ENCODE measurements at regions of chr19 and their contacts with region 1.

Region 1: GRCh38 chr19:40444192-40445028 is at the start of gene SERTAD3:
- DNase-seq: peak; percentile 100
- H3K4me3 Mint-ChIP-seq: peak within 1 kb of the TSS; percentile 90
- H3K27ac Mint-ChIP-seq: peak within 1 kb of the TSS; percentile 92
- H3K4me1 Mint-ChIP-seq: peaks cover 20% of the 10 kb centered on the region
- H3K27me3 Mint-ChIP-seq: no peaks in the 10 kb centered on the region
- CTCF ChIP-seq: no peak
- total RNA-seq, gene SERTAD3: 51.9 and 56.7 TPM in 2 replicates

Region 2: DNA sequence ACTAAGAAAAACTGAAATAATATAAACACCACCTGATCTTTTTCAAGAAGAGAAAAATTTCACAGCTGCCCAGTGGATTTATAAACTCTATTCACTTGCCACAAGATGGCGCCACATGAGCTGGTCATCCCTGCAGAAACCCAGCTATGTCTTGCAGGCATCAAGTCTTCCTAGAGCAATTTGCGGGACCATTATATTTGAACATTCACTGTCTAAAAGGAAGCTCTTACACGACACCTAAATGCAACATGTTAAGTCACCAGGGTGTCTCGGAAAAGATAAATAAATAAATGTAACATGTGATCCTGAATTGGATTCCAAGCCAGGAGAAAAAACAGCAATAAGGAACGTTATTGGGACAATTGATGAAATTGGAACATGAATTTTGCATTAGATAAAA is 139.0 kb before region 1 on chr19:
- CTCF ChIA-PET with region 1: interaction called, 4 read pairs
- intact Hi-C with region 1: loop called (anchors 10 kb)
- DNase-seq: peak; percentile 83
- H3K4me3 Mint-ChIP-seq: no peak overlapping the region
- H3K27ac Mint-ChIP-seq: no peak overlapping the region
- H3K4me1 Mint-ChIP-seq: no peaks in the 10 kb centered on the region
- H3K27me3 Mint-ChIP-seq: no peaks in the 10 kb centered on the region
- CTCF ChIP-seq: peak; percentile 88

Region 3: DNA sequence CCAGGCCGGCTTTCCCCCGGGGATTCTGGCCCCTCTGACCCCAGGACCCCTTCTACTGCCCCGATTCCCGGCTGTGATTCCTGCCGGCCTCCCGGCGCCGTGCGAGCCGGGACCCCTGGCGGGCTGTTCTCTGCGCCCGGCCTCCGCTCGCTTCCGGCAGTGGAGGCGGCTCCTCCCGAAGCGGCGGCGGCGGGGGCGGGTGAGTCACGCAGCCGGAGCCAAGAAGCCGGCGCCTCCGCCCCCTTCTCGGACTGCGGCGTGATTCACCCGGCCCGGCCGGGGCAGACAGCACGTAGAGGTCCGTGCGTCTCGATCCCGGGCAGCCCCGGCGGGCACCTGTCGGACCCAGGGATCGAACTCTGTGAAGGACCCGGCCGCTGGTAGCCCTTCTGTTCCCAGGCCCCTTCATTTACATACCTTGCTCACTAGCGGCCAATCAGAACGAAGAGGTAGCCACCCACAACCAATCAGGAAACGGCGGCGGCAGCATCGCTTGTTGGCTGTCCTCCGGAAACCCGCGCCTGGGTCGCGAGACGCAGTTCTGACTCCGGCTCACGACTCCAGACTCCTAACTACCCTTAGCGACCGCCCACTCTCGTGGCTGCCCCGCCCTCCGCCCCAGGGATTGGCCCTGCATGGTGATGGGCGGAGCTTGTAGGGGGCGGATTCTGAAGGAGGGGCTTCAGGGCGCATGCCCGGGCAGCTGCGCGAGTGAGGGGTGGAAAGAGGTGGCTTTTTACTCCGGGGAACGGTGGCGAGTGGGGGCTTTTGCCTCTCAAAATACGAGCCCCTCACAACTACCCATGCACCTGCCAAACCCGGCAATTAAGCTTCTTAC is 18.7 kb before region 1 on chr19 and contains the start of gene SERTAD1:
- CTCF ChIA-PET with region 1: interaction called, 18 read pairs
- intact Hi-C with region 1: no loop called
- DNase-seq: peak; percentile 100
- H3K4me3 Mint-ChIP-seq: peak within 1 kb of the TSS; percentile 88
- H3K27ac Mint-ChIP-seq: peak within 1 kb of the TSS; percentile 93
- H3K4me1 Mint-ChIP-seq: peaks cover 9% of the 10 kb centered on the region
- H3K27me3 Mint-ChIP-seq: no peaks in the 10 kb centered on the region
- CTCF ChIP-seq: peak; percentile 93
- total RNA-seq, gene SERTAD1: 12.3 and 15.4 TPM in 2 replicates

Region 4: GRCh38 chr19:40433391-40434216 is 10.8 kb before region 1 on chr19:
- CTCF ChIA-PET with region 1: interaction called, 11 read pairs
- intact Hi-C with region 1: no loop called
- DNase-seq: peak; percentile 92
- H3K4me3 Mint-ChIP-seq: peak overlapping the region; percentile 71
- H3K27ac Mint-ChIP-seq: peak overlapping the region; percentile 69
- H3K4me1 Mint-ChIP-seq: peaks cover 13% of the 10 kb centered on the region
- H3K27me3 Mint-ChIP-seq: no peaks in the 10 kb centered on the region
- CTCF ChIP-seq: no peak